ENCODE measurements at regions of chr4 and their contacts with region 1.

Region 1: GRCh38 chr4:142984871-142985585 is 138.9 kb upstream of the INPP4B start:
- DNase-seq: no peak
- H3K4me3 ChIP-seq: no peak overlapping the region
- H3K27ac ChIP-seq: no peak overlapping the region
- H3K27me3 ChIP-seq: no peaks in the 10 kb centered on the region
- CTCF ChIP-seq: peak; percentile 62

Region 2: DNA sequence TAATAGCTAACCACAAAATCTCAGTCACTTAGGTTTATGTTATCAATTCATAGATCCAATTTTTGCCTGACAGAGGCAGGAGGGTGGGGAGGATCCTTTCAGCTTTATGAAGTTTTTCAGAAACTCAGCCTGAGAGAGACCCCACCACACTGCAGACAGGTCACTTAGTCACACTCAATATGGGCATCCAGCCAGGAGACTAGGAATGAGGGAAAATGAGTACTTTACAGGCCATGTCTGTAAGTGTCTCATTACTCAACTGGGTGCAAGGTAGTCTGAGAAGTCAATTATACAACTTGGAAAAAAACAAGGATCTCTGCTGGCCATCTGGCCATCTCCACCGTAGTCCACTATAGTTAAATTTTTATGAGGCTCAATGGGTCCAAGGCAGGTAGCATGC is 504.8 kb before region 1 on chr4:
- CTCF ChIA-PET with region 1: interaction called, 11 read pairs
- POLR2A ChIA-PET with region 1: no interaction called
- DNase-seq: no peak
- H3K4me3 ChIP-seq: no peak overlapping the region
- H3K27ac ChIP-seq: no peak overlapping the region
- H3K27me3 ChIP-seq: no peaks in the 10 kb centered on the region
- CTCF ChIP-seq: no peak

Region 3: DNA sequence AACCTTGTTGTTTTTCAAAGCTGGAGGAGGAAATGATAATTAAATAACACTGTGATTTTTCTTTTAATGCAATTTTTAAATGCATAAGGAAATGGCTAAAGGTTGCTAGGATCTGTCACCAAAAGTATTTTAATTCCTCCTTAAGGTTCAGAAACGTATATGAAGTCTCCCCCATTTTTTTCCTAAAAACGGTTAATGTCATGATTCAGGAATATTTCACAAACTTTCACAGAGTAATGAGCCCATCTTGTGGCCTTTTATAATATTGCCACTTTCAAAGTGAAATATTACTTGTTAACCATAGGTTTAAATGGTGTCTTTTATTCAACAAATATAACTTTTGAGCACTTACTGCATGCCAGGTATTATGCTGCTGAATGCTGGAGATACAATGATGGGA is 100.2 kb after region 1 on chr4:
- CTCF ChIA-PET with region 1: interaction called, 11 read pairs
- POLR2A ChIA-PET with region 1: no interaction called
- DNase-seq: no peak
- H3K4me3 ChIP-seq: no peak overlapping the region
- H3K27ac ChIP-seq: no peak overlapping the region
- H3K27me3 ChIP-seq: peaks cover 4% of the 10 kb centered on the region
- CTCF ChIP-seq: peak; percentile 30; the same call in 1 of the 2 replicates

Measured in AG04450 (cell line).